ENCODE measurements at regions of chr1 and their contacts with region 1.

Region 1: DNA sequence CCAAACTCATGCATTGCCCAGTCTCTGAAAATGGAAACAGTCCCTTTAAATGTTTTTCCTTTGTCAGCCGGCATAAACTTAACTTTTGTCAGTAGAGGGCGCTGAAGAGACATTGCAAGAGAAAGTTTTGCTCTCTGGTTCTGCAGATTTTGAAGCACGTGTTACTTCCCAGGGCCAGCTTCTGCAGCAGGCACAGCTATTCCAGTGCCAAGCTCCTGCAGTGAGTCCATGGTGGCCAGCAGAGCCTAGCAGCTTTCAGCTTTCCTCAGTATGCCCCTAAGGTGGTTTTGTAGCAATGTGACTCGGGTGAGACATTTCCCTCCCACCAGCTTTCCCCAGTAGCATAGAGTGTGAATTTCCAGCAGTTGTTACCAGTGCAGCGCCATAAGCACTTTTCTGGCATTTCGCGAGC is 2.6 kb upstream of the IFI44L start:
- DNase-seq: peak; percentile 43
- ATAC-seq: peak; percentile 96
- H3K4me3 Mint-ChIP-seq: no peak overlapping the region
- H3K27ac Mint-ChIP-seq: no peak overlapping the region
- H3K4me1 Mint-ChIP-seq: peaks cover 11% of the 10 kb centered on the region
- H3K27me3 Mint-ChIP-seq: peaks cover 5% of the 10 kb centered on the region; the same call in 1 of the 2 replicates
- CTCF ChIP-seq: peak; percentile 58

Region 2: GRCh38 chr1:78254517-78254916 is 363.1 kb before region 1 on chr1:
- CTCF ChIA-PET with region 1: no interaction called
- POLR2A ChIA-PET with region 1: no interaction called
- DNase-seq: no peak
- ATAC-seq: no peak
- H3K4me3 Mint-ChIP-seq: no peak overlapping the region
- H3K27ac Mint-ChIP-seq: no peak overlapping the region
- H3K4me1 Mint-ChIP-seq: no peaks in the 10 kb centered on the region
- H3K27me3 Mint-ChIP-seq: peaks cover 99% of the 10 kb centered on the region
- CTCF ChIP-seq: no peak

Region 3: GRCh38 chr1:78607334-78607927 is 10.2 kb before region 1 on chr1:
- CTCF ChIA-PET with region 1: interaction called, 20 read pairs
- POLR2A ChIA-PET with region 1: no interaction called
- DNase-seq: no peak
- ATAC-seq: no peak
- H3K4me3 Mint-ChIP-seq: no peak overlapping the region
- H3K27ac Mint-ChIP-seq: no peak overlapping the region
- H3K4me1 Mint-ChIP-seq: no peaks in the 10 kb centered on the region
- H3K27me3 Mint-ChIP-seq: no peaks in the 10 kb centered on the region
- CTCF ChIP-seq: 0 out of 2 replicates have a peak, but pooled peaks have one; percentile 24

Region 4: DNA sequence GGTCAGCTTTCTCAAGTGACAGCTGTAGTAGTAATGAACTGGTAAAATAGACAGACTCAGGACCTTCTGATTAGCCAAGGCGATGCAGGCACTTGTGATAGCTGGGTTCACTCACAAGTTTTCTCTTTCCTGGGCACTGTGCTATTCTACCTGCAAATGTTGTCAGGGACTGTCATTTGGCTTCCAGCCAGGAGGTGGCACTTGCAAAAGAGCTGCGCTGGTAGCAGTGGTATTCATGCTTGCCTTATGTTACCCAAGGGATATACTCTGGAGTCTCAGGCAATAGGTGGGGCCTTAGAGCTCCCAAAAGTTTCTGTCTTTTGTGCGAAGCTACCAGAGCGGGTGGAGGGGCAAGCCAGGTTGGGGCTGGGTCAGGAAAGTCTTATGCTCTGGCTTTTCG is 55.5 kb after region 1 on chr1:
- CTCF ChIA-PET with region 1: interaction called, 22 read pairs
- POLR2A ChIA-PET with region 1: no interaction called
- DNase-seq: peak; percentile 62
- ATAC-seq: peak; percentile 95
- H3K4me3 Mint-ChIP-seq: no peak overlapping the region
- H3K27ac Mint-ChIP-seq: no peak overlapping the region
- H3K4me1 Mint-ChIP-seq: no peaks in the 10 kb centered on the region
- H3K27me3 Mint-ChIP-seq: no peaks in the 10 kb centered on the region
- CTCF ChIP-seq: no peak; the same call in 1 of the 2 replicates

Region 5: DNA sequence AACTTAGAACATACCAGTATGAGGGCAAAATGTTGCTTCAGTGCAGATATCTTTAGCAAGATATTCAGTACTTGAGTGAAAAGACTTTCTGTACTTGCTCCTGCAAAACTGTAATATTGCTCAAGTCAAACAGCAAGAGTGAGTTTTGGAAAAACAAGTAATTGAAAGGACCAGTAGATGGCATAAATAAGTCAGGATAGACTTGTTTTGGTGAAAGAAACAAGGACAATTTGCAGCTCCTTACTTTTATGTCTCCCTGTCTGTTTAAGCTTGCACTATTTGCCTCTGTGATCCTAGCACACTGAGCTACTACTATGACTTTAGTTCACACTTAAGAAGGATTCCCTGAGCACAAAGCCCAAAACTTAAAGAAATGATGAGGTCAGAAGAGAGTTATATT is 71.1 kb after region 1 on chr1:
- CTCF ChIA-PET with region 1: no interaction called
- POLR2A ChIA-PET with region 1: no interaction called
- DNase-seq: no peak
- ATAC-seq: peak; percentile 32; the same call in 1 of the 2 replicates
- H3K4me3 Mint-ChIP-seq: no peak overlapping the region
- H3K27ac Mint-ChIP-seq: no peak overlapping the region
- H3K4me1 Mint-ChIP-seq: peaks cover 4% of the 10 kb centered on the region
- H3K27me3 Mint-ChIP-seq: no peaks in the 10 kb centered on the region
- CTCF ChIP-seq: no peak

Region 6: GRCh38 chr1:78726686-78727085 is 109.1 kb after region 1 on chr1:
- CTCF ChIA-PET with region 1: no interaction called
- POLR2A ChIA-PET with region 1: no interaction called
- DNase-seq: no peak
- ATAC-seq: no peak
- H3K4me3 Mint-ChIP-seq: no peak overlapping the region
- H3K27ac Mint-ChIP-seq: no peak overlapping the region
- H3K4me1 Mint-ChIP-seq: peaks cover 3% of the 10 kb centered on the region; the same call in 1 of the 2 replicates
- H3K27me3 Mint-ChIP-seq: no peaks in the 10 kb centered on the region
- CTCF ChIP-seq: no peak

Region 7: DNA sequence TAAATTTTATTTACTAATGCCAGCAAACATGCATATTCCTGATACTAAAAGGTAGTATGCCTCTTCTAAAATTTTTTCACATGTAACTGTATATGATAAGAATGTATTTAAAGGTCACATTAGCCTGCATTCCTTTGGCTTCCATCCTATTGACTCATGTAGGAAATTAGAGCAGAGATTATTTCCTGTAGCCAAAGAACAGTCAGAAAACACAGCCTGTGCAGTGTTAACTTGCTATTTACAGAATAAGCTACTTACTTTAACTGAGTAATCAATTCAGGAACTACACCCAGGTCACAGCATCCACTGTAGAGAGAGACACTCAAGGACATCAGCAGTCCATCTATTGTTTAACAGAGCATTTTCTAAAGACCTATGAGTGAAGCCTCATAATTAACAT is 543.5 kb after region 1 on chr1:
- CTCF ChIA-PET with region 1: no interaction called
- POLR2A ChIA-PET with region 1: no interaction called
- DNase-seq: no peak
- ATAC-seq: no peak
- H3K4me3 Mint-ChIP-seq: no peak overlapping the region
- H3K27ac Mint-ChIP-seq: no peak overlapping the region
- H3K4me1 Mint-ChIP-seq: no peaks in the 10 kb centered on the region
- H3K27me3 Mint-ChIP-seq: no peaks in the 10 kb centered on the region; the same call in 1 of the 2 replicates
- CTCF ChIP-seq: no peak

Measured in WTC11 (cell line).